PC-9 (cell line): ENCODE measurements at regions of chr14 and their contacts with region 1.

Region 1: GRCh38 chr14:48247977-48248376 is 572.6 kb upstream of the MDGA2 start:
- DNase-seq: no peak
- H3K4me3 ChIP-seq: no peak overlapping the region
- H3K27ac ChIP-seq: no peak overlapping the region
- H3K4me1 ChIP-seq: no peaks in the 10 kb centered on the region
- H3K27me3 ChIP-seq: no peaks in the 10 kb centered on the region
- CTCF ChIP-seq: no peak

Region 2: GRCh38 chr14:48035836-48036235 is 212.1 kb before region 1 on chr14:
- CTCF ChIA-PET with region 1: no interaction called
- POLR2A ChIA-PET with region 1: no interaction called
- intact Hi-C with region 1: loop called (anchors 5 kb)
- DNase-seq: no peak
- H3K4me3 ChIP-seq: no peak overlapping the region
- H3K27ac ChIP-seq: no peak overlapping the region
- H3K4me1 ChIP-seq: no peaks in the 10 kb centered on the region
- H3K27me3 ChIP-seq: no peaks in the 10 kb centered on the region
- CTCF ChIP-seq: no peak

Region 3: GRCh38 chr14:48229091-48229490 is 18.9 kb before region 1 on chr14:
- CTCF ChIA-PET with region 1: no interaction called
- POLR2A ChIA-PET with region 1: no interaction called
- intact Hi-C with region 1: no loop called
- DNase-seq: no peak
- H3K4me3 ChIP-seq: no peak overlapping the region
- H3K27ac ChIP-seq: no peak overlapping the region
- H3K4me1 ChIP-seq: no peaks in the 10 kb centered on the region
- H3K27me3 ChIP-seq: no peaks in the 10 kb centered on the region
- CTCF ChIP-seq: no peak

Region 4: DNA sequence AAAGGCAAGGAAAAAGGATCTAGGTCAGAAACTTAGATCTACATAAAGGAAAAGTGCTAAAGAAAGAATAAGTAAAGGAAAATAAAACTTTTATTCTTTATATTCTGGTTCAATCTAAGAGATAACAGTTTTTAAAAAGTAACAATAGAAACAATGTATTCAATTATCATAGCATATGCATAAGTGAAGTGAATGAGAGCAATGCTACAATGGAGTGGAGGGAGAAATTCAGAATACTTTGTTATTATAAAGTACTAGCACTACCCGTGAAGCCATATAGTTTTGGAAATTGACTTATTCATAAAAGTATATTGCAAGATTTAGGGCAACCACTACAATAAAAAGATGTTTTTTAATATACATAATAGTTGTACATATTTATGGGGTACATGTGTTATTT is 13.5 kb after region 1 on chr14:
- CTCF ChIA-PET with region 1: no interaction called
- POLR2A ChIA-PET with region 1: no interaction called
- intact Hi-C with region 1: no loop called
- DNase-seq: no peak
- H3K4me3 ChIP-seq: no peak overlapping the region
- H3K27ac ChIP-seq: no peak overlapping the region
- H3K4me1 ChIP-seq: no peaks in the 10 kb centered on the region
- H3K27me3 ChIP-seq: no peaks in the 10 kb centered on the region
- CTCF ChIP-seq: no peak

Region 5: DNA sequence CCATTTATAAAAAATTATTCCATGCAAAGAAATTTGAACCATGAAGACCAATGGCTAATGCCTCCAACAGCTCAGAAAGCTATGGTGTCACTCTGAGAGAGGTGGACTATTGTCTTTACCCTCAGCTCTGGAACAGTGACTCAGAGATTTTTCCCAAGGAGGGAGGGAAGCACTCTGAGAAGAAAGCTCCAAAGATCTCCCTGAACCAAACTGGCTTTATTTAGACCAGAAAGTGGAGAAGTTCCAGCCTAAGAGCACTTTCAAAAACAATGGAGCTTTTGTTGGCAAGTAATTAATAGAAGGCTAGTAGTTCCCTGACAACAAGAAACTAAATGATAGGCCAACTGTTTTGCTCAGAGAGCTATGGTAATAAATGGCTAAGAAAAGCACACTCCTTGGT is 27.3 kb after region 1 on chr14:
- CTCF ChIA-PET with region 1: no interaction called
- POLR2A ChIA-PET with region 1: interaction called, 10 read pairs
- intact Hi-C with region 1: no loop called
- DNase-seq: no peak
- H3K4me3 ChIP-seq: no peak overlapping the region
- H3K27ac ChIP-seq: no peak overlapping the region
- H3K4me1 ChIP-seq: no peaks in the 10 kb centered on the region
- H3K27me3 ChIP-seq: no peaks in the 10 kb centered on the region
- CTCF ChIP-seq: no peak